GM10248 (cell line): ENCODE measurements at regions of chr11 and their contacts with region 1.

Region 1: DNA sequence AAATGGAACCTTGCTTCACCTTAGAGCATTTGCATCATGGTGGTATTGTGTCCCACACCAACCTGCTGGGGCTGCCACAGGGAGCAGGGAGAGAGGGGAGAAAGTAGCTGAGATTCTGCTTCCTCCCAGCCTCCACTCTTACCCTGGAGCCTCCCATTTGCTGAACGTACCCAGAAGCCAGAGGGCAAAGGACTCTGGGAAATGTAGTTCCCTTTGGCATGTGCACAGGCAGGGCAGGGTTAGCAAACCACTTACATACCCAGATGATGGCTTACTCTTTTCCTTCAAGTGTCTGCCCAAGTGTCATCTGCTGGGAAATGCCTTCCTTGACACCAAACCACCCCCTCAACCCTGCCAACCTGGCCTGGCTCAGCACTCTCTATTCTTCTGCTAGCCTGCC is 16.9 kb downstream of the SMIM38 start:
- DNase-seq: no peak
- CTCF ChIP-seq: no peak

Region 2: GRCh38 chr11:69193629-69194028 is 21.0 kb after region 1 on chr11:
- CTCF ChIA-PET with region 1: no interaction called
- POLR2A ChIA-PET with region 1: interaction called, 12 read pairs
- DNase-seq: no peak
- CTCF ChIP-seq: no peak